Kidney (tissue), 22 donors: ENCODE measurements at regions of chr1 and their contacts with region 1.

Region 1: GRCh38 chr1:178031856-178032320 is 62.0 kb upstream of the RASAL2 start:
- DNase-seq: peak; percentile 81 to 93 (median 86)
- H3K4me3 ChIP-seq: no peak overlapping the region
- H3K27ac ChIP-seq: peak overlapping the region in 1 of 2 donors; percentile 26
- H3K4me1 ChIP-seq: peaks cover 0 to 24% (median 8%) of the 10 kb centered on the region in 3 donors
- H3K27me3 ChIP-seq: no peaks in the 10 kb centered on the region
- CTCF ChIP-seq: peak; percentile 85

Region 2: DNA sequence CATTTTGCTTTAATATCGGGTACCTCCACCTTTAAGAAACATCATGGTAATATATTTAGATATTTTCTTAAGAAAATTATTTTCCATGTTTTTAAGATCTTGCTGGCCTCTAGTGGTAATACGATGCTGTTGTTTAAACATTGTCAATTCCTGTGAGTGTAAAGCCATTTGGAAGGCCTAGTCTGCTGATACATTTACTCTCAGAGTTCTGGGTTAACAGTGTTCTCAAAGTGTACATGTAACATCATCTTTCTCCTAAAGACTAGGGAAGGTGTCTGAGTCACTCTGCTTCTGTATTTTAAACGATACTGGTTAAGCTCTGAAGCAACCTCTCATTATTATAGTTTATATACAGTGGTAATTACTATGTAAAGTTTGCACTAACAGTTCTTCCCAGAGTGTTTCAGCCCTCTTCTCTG is 251.1 kb after region 1 on chr1:
- intact Hi-C with region 1: loop called (anchors 10 kb)
- DNase-seq: peak in 1 of 5 donors; percentile 45
- H3K4me3 ChIP-seq: no peak overlapping the region
- H3K27ac ChIP-seq: no peak overlapping the region
- H3K4me1 ChIP-seq: peaks cover 0 to 7% (median 2%) of the 10 kb centered on the region in 3 donors
- H3K27me3 ChIP-seq: no peaks in the 10 kb centered on the region
- CTCF ChIP-seq: peak; percentile 36